ENCODE measurements at regions of chr1 and their contacts with region 1.

Region 1: GRCh38 chr1:62144238-62144831 is 50.3 kb upstream of the L1TD1 start:
- DNase-seq: peak; percentile 63
- ATAC-seq: peak; percentile 50
- H3K4me3 Mint-ChIP-seq: no peak overlapping the region
- H3K27ac Mint-ChIP-seq: no peak overlapping the region; the same call in 1 of the 2 replicates
- H3K4me1 Mint-ChIP-seq: peaks cover 18% of the 10 kb centered on the region
- H3K27me3 Mint-ChIP-seq: no peaks in the 10 kb centered on the region
- CTCF ChIP-seq: peak; percentile 75; the same call in 1 of the 2 replicates

Region 2: GRCh38 chr1:62093261-62093660 is 51.1 kb before region 1 on chr1:
- CTCF ChIA-PET with region 1: interaction called, 11 read pairs
- POLR2A ChIA-PET with region 1: no interaction called
- DNase-seq: no peak
- ATAC-seq: no peak
- H3K4me3 Mint-ChIP-seq: no peak overlapping the region
- H3K27ac Mint-ChIP-seq: no peak overlapping the region
- H3K4me1 Mint-ChIP-seq: peaks cover 18% of the 10 kb centered on the region
- H3K27me3 Mint-ChIP-seq: no peaks in the 10 kb centered on the region
- CTCF ChIP-seq: no peak

Region 3: GRCh38 chr1:62131093-62131725 is 13.1 kb before region 1 on chr1:
- CTCF ChIA-PET with region 1: interaction called, 27 read pairs
- POLR2A ChIA-PET with region 1: interaction called, 8 read pairs
- DNase-seq: peak; percentile 64
- ATAC-seq: peak; percentile 97
- H3K4me3 Mint-ChIP-seq: no peak overlapping the region
- H3K27ac Mint-ChIP-seq: no peak overlapping the region
- H3K4me1 Mint-ChIP-seq: peaks cover 8% of the 10 kb centered on the region
- H3K27me3 Mint-ChIP-seq: no peaks in the 10 kb centered on the region
- CTCF ChIP-seq: peak; percentile 46

Region 4: GRCh38 chr1:62154687-62155086 is 10.4 kb after region 1 on chr1:
- CTCF ChIA-PET with region 1: interaction called, 28 read pairs
- POLR2A ChIA-PET with region 1: interaction called, 5 read pairs
- DNase-seq: no peak
- ATAC-seq: no peak
- H3K4me3 Mint-ChIP-seq: no peak overlapping the region
- H3K27ac Mint-ChIP-seq: no peak overlapping the region
- H3K4me1 Mint-ChIP-seq: no peaks in the 10 kb centered on the region
- H3K27me3 Mint-ChIP-seq: no peaks in the 10 kb centered on the region
- CTCF ChIP-seq: no peak

Region 5: DNA sequence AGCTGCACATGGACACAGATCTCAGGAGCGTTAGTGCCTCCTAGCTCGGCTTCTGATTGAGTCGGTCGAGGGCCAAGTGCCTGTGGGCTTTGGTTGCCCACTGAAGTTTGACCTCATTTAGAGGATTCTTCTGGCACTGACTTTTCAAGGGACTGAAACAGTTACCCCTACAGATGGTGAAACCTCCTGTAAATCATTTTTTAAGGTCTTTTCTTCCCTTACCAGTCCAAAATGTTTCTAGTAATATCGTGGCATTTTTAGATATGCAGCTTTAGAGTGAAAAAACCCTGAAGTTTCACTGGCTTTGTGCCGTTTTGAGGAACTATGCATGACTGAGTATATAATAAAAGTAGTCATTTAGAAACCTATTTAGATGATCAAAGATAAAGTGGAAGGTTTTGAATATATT is 15.6 kb after region 1 on chr1:
- CTCF ChIA-PET with region 1: interaction called, 28 read pairs
- POLR2A ChIA-PET with region 1: interaction called, 5 read pairs
- DNase-seq: no peak
- ATAC-seq: no peak
- H3K4me3 Mint-ChIP-seq: no peak overlapping the region
- H3K27ac Mint-ChIP-seq: no peak overlapping the region
- H3K4me1 Mint-ChIP-seq: no peaks in the 10 kb centered on the region
- H3K27me3 Mint-ChIP-seq: no peaks in the 10 kb centered on the region
- CTCF ChIP-seq: no peak